GM12878 (cell line): ENCODE measurements at regions of chr1 and their contacts with region 1.

Region 1: GRCh38 chr1:64242895-64243756 is 39.7 kb downstream of the UBE2U start:
- DNase-seq: no peak
- ATAC-seq: peak; percentile 72
- H3K4me3 ChIP-seq: no peak overlapping the region
- H3K27ac ChIP-seq: no peak overlapping the region
- H3K4me1 ChIP-seq: no peaks in the 10 kb centered on the region
- H3K27me3 ChIP-seq: 0 out of 4 replicates have a peak, but pooled peaks cover 0 to 2% of the 10 kb centered on the region in 2 experiments
- CTCF ChIP-seq: peak in 2 of 3 experiments; percentile 11 to 48; a peak in 2 of 6 replicates
- EP300 ChIP-seq: no peak
- POLR2A ChIP-seq: no peak
- RAD21 ChIP-seq: peak; percentile 66

Region 2: DNA sequence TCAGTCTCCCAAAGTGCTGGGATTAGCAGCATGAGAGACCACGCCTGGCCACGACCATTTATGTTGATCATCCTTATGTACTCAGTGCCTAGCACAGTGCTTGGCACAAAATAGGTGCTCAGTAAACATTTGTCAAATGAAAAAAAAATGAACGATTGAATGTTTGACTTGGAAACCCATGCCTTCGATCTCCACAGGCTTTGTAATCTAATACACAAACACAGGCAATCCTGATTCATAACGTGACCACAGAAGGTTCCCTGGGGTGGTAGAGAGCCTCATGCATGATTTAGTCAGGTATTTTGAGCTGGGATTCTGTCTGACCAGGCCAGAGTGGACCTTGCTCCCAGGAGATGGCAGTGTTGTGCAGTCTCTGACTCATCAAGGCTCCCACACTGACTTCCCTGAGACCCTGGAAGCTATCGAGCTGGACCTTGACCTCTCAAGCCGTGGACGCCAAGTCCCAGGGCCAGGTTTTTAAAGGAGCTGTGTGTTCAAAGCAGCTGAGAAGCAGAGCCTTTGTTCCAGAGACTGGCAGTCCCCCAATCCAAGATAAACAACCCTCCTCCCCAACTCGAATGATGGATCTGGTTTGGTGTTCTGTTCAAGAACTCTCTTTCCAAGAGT is 568.8 kb before region 1 on chr1:
- CTCF ChIA-PET with region 1: interaction called, 8 read pairs
- POLR2A ChIA-PET with region 1: no interaction called
- RAD21 ChIA-PET with region 1: interaction called, 7 read pairs
- SMC1A ChIA-PET with region 1: interaction called, 12 read pairs
- in situ Hi-C with region 1: no loop called
- intact Hi-C with region 1: no loop called
- DNase-seq: no peak
- ATAC-seq: peak; percentile 94
- H3K4me3 ChIP-seq: no peak overlapping the region
- H3K27ac ChIP-seq: no peak overlapping the region
- H3K4me1 ChIP-seq: no peaks in the 10 kb centered on the region
- H3K27me3 ChIP-seq: no peaks in the 10 kb centered on the region
- CTCF ChIP-seq: peak; percentile 42 to 60 (median 42); a peak in 5 of 6 replicates
- EP300 ChIP-seq: no peak
- POLR2A ChIP-seq: no peak
- RAD21 ChIP-seq: peak; percentile 50

Region 3: GRCh38 chr1:63691701-63692425 is 551.3 kb before region 1 on chr1:
- CTCF ChIA-PET with region 1: interaction called, 51 read pairs
- POLR2A ChIA-PET with region 1: no interaction called
- RAD21 ChIA-PET with region 1: interaction called, 61 read pairs
- SMC1A ChIA-PET with region 1: interaction called, 49 read pairs
- in situ Hi-C with region 1: no loop called
- intact Hi-C with region 1: loop called (anchors 1 kb)
- DNase-seq: no peak
- ATAC-seq: peak; percentile 90
- H3K4me3 ChIP-seq: no peak overlapping the region
- H3K27ac ChIP-seq: no peak overlapping the region
- H3K4me1 ChIP-seq: no peaks in the 10 kb centered on the region
- H3K27me3 ChIP-seq: no peaks in the 10 kb centered on the region; a peak in 1 of 4 replicates
- CTCF ChIP-seq: peak; percentile 76 to 84 (median 83)
- EP300 ChIP-seq: no peak
- POLR2A ChIP-seq: no peak
- RAD21 ChIP-seq: peak; percentile 90

Region 4: GRCh38 chr1:63922848-63923247 is 320.3 kb before region 1 on chr1:
- CTCF ChIA-PET with region 1: interaction called, 16 read pairs
- POLR2A ChIA-PET with region 1: interaction called, 6 read pairs
- RAD21 ChIA-PET with region 1: interaction called, 9 read pairs
- SMC1A ChIA-PET with region 1: interaction called, 5 read pairs
- in situ Hi-C with region 1: no loop called
- intact Hi-C with region 1: loop called (anchors 2 kb)
- DNase-seq: no peak
- ATAC-seq: no peak; the same call in 2 of the 3 replicates
- H3K4me3 ChIP-seq: no peak overlapping the region
- H3K27ac ChIP-seq: no peak overlapping the region
- H3K4me1 ChIP-seq: no peaks in the 10 kb centered on the region
- H3K27me3 ChIP-seq: no peaks in the 10 kb centered on the region
- CTCF ChIP-seq: no peak
- EP300 ChIP-seq: no peak
- POLR2A ChIP-seq: no peak
- RAD21 ChIP-seq: no peak

Region 5: GRCh38 chr1:64116537-64116936 is 126.6 kb before region 1 on chr1:
- CTCF ChIA-PET with region 1: interaction called, 7 read pairs
- POLR2A ChIA-PET with region 1: no interaction called
- RAD21 ChIA-PET with region 1: interaction called, 3 read pairs
- SMC1A ChIA-PET with region 1: interaction called, 5 read pairs
- in situ Hi-C with region 1: no loop called
- intact Hi-C with region 1: loop called (anchors 2 kb)
- DNase-seq: no peak
- ATAC-seq: no peak
- H3K4me3 ChIP-seq: no peak overlapping the region
- H3K27ac ChIP-seq: no peak overlapping the region
- H3K4me1 ChIP-seq: no peaks in the 10 kb centered on the region
- H3K27me3 ChIP-seq: no peaks in the 10 kb centered on the region; a peak in 1 of 4 replicates
- CTCF ChIP-seq: no peak
- EP300 ChIP-seq: no peak
- POLR2A ChIP-seq: no peak
- RAD21 ChIP-seq: no peak

Region 6: GRCh38 chr1:64320470-64320869 is 77.3 kb after region 1 on chr1:
- CTCF ChIA-PET with region 1: no interaction called
- POLR2A ChIA-PET with region 1: no interaction called
- RAD21 ChIA-PET with region 1: no interaction called
- SMC1A ChIA-PET with region 1: no interaction called
- in situ Hi-C with region 1: no loop called
- intact Hi-C with region 1: no loop called
- DNase-seq: no peak
- ATAC-seq: no peak
- H3K4me3 ChIP-seq: no peak overlapping the region
- H3K27ac ChIP-seq: no peak overlapping the region
- H3K4me1 ChIP-seq: no peaks in the 10 kb centered on the region
- H3K27me3 ChIP-seq: no peaks in the 10 kb centered on the region
- CTCF ChIP-seq: no peak
- EP300 ChIP-seq: no peak
- POLR2A ChIP-seq: no peak
- RAD21 ChIP-seq: no peak

Region 7: GRCh38 chr1:64343105-64343887 is 100.2 kb after region 1 on chr1:
- CTCF ChIA-PET with region 1: no interaction called
- POLR2A ChIA-PET with region 1: no interaction called
- RAD21 ChIA-PET with region 1: no interaction called
- SMC1A ChIA-PET with region 1: no interaction called
- in situ Hi-C with region 1: no loop called
- intact Hi-C with region 1: no loop called
- DNase-seq: no peak
- ATAC-seq: no peak
- H3K4me3 ChIP-seq: no peak overlapping the region
- H3K27ac ChIP-seq: no peak overlapping the region
- H3K4me1 ChIP-seq: no peaks in the 10 kb centered on the region
- H3K27me3 ChIP-seq: peaks cover 0 to 3% of the 10 kb centered on the region in 2 experiments; a peak in 1 of 4 replicates
- CTCF ChIP-seq: no peak
- EP300 ChIP-seq: no peak
- POLR2A ChIP-seq: no peak
- RAD21 ChIP-seq: no peak